ENCODE measurements at regions of chr2 and their contacts with region 1.

Region 1: GRCh38 chr2:60998628-60999545 is 18.6 kb upstream of the PEX13 start:
- DNase-seq: no peak
- H3K4me3 Mint-ChIP-seq: no peak overlapping the region
- H3K27ac Mint-ChIP-seq: no peak overlapping the region
- H3K4me1 Mint-ChIP-seq: no peaks in the 10 kb centered on the region
- H3K27me3 Mint-ChIP-seq: no peaks in the 10 kb centered on the region

Region 2: DNA sequence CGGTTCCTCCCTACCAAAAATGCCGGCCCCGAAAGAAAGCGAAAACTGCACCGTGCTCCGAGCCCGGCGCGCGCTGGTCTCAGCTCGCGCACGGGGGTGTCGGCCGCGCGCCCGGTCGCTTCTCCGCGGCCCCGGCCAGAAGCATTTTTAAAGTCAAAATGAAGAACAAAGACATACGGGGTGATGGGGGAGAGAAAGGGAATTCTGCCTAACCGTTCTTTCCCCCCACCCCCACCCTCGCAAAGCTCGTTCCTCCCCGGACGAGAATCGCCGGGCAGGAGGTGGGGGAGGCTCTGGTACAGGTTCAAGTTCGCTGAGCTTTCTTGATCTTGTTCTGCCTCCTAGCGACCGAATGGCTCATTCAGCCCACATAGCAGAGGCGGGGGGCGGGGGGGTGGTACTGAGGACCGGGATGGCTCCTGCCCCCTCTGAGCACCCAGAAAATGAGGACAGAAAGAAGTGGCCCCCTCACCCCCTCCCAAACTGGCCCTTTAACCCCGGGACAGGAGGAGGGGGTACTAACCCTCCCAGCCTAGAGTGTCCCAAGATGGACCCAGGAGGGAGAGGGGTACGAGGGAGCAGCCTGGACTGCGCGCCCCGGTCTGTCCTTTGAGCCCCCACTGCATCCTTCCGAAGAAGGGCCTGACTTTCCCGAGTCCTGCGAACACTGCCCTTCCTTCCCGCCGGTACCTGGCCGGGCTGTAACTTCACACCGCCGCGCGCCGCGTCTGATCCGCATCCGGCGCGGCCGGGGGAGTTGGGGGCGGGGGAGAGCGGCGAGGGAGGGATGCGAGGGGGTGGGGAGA is 448.5 kb before region 1 on chr2:
- intact Hi-C with region 1: no loop called
- DNase-seq: no peak
- H3K4me3 Mint-ChIP-seq: peak overlapping the region; percentile 80
- H3K27ac Mint-ChIP-seq: peak overlapping the region; percentile 29
- H3K4me1 Mint-ChIP-seq: peaks cover 20% of the 10 kb centered on the region
- H3K27me3 Mint-ChIP-seq: peaks cover 76% of the 10 kb centered on the region

Region 3: DNA sequence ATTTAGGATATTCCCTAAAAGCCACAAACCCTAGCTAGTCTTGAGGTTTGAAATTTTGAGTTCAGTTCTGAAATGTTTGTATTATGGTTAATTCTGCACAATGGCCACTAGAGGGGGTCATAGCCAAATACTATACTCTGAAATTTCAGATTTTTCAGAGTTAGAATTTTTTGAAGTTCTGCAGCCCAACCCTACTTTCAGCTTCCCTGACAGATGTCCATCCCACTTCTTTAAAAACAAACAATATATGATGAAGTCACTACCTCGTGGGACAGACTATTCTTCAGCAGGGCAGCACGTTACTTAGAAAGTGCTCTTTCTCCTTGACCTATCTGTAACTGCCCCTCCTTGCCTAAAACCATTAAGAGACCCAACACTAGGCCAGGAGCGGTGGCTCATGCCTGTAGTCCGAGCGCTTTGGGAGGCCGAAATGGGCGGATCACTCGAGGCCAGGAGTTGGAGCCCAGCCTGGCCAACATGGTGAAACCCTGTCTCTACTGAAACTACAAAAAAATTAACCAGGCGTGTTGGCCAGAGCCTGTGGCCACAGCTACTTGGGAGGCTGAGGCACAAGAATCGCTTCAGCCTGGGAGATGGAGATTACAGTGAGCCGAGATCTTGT is 291.0 kb before region 1 on chr2:
- intact Hi-C with region 1: loop called (anchors 1 kb)
- DNase-seq: no peak
- H3K4me3 Mint-ChIP-seq: no peak overlapping the region
- H3K27ac Mint-ChIP-seq: no peak overlapping the region
- H3K4me1 Mint-ChIP-seq: no peaks in the 10 kb centered on the region
- H3K27me3 Mint-ChIP-seq: no peaks in the 10 kb centered on the region

Region 4: DNA sequence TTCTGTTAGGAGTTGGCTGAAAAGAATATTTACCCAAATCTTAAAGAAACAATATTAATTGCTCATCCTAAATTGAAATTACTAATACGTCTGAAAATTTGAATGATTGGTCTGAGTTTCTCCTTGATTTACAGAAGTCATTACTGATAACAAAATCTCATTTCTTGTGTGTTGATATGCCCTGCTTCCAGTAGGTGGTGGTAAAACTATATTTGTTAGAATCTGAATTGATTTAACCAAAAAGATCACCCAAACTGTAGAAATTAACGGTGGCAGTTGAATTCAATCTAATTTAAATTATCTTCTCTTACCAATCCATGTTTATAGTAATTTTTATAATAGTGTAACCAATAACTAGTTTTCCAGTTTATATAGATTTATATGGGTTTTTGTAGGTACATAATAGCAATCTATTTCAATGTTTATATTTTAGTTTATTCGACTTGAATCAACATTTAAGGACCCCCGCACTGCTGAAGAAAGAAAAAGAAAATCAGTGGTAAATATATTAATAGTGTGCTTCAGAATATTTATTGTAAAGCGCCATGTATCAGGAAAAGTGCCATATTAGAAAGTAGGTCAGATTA is 204.5 kb before region 1 on chr2:
- intact Hi-C with region 1: loop called (anchors 1 kb)
- DNase-seq: no peak
- H3K4me3 Mint-ChIP-seq: no peak overlapping the region
- H3K27ac Mint-ChIP-seq: no peak overlapping the region
- H3K4me1 Mint-ChIP-seq: peaks cover 16% of the 10 kb centered on the region
- H3K27me3 Mint-ChIP-seq: no peaks in the 10 kb centered on the region

Region 5: GRCh38 chr2:60899230-60899891 is 99.5 kb before region 1 on chr2:
- intact Hi-C with region 1: loop called (anchors 2 kb)
- DNase-seq: no peak
- H3K4me3 Mint-ChIP-seq: peak overlapping the region; percentile 54
- H3K27ac Mint-ChIP-seq: peak overlapping the region; percentile 95
- H3K4me1 Mint-ChIP-seq: peaks cover 35% of the 10 kb centered on the region
- H3K27me3 Mint-ChIP-seq: peaks cover 2% of the 10 kb centered on the region

Region 6: GRCh38 chr2:60948926-60949579 is 49.8 kb before region 1 on chr2:
- intact Hi-C with region 1: loop called (anchors 10 kb)
- DNase-seq: no peak
- H3K4me3 Mint-ChIP-seq: no peak overlapping the region
- H3K27ac Mint-ChIP-seq: no peak overlapping the region
- H3K4me1 Mint-ChIP-seq: peaks cover 5% of the 10 kb centered on the region
- H3K27me3 Mint-ChIP-seq: no peaks in the 10 kb centered on the region

Region 7: DNA sequence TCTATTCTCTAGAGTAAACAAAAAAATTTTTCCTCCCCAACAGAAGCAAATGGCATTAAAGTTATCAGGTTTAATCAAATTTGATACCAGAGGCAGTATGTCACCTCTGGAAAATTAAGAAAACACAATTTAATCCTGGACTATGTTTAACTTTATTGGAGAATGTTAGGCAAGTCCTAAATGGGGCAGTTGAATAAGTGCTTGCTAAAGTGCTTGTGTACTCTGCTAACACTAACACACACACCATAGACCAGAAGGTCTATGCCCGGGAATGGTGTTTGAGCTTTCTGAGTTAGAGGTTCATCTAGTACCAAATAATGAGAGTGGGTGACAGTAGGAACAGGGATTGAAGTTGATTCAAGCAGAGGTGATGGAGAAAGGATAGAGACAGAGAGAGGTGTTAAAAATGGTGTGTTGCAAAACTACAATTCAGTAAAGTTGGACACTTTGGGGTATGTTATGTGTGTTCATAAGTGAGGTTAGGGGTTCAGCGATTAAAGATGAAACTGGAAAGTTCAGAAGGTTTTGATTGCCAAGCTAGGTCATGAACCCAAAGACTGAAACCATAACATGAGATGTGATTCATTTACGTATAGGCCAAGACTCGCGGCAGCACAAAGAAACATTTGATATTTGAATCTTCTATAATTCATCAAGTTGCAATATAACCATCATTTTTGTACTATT is 21.9 kb before region 1 on chr2:
- intact Hi-C with region 1: loop called (anchors 2 kb)
- DNase-seq: no peak
- H3K4me3 Mint-ChIP-seq: no peak overlapping the region
- H3K27ac Mint-ChIP-seq: peak overlapping the region; percentile 38
- H3K4me1 Mint-ChIP-seq: peaks cover 29% of the 10 kb centered on the region
- H3K27me3 Mint-ChIP-seq: no peaks in the 10 kb centered on the region

Region 8: GRCh38 chr2:61016808-61017555 is 18.1 kb after region 1 on chr2:
- intact Hi-C with region 1: no loop called
- DNase-seq: peak; percentile 63
- H3K4me3 Mint-ChIP-seq: peak overlapping the region; percentile 97
- H3K27ac Mint-ChIP-seq: peak overlapping the region; percentile 96
- H3K4me1 Mint-ChIP-seq: peaks cover 37% of the 10 kb centered on the region
- H3K27me3 Mint-ChIP-seq: no peaks in the 10 kb centered on the region

Region 9: DNA sequence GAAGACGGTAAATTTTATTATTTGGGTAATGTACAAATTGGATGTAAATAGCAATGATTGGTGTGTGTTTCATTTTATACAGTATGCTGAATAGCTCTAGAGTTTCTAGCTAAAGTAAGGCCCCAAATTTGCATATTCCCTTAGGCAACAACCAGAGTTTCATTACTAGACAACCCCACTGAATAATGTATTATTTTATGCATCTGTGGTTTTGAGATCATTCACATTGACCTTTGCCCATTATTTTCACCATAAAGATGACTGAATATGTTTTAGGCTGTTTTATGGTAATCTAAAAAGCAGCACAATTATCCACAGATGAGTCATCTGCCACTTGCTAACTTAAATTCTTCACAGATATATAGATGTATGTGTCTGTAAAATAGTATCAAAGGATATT is 118.6 kb after region 1 on chr2:
- intact Hi-C with region 1: no loop called
- DNase-seq: no peak
- H3K4me3 Mint-ChIP-seq: no peak overlapping the region
- H3K27ac Mint-ChIP-seq: no peak overlapping the region
- H3K4me1 Mint-ChIP-seq: peaks cover 4% of the 10 kb centered on the region
- H3K27me3 Mint-ChIP-seq: no peaks in the 10 kb centered on the region

Measured in activated T-helper 1 cell treated with anti-CD3 and anti-CD28 coated beads, Interleukin-12 subunit alpha, Interleukin-12 subunit beta, Interleukin-2, Interleukin-4 antibody, amounts not matched to agents 30 ng/mL and 10 ng/mL and 1 ng/mL, durations not matched to agents 14 hours and 24 hours and 36 hours (primary cell).